Astrocyte of the cerebellum (primary cell): ENCODE measurements at regions of chr10 and their contacts with region 1.

Region 1: GRCh38 chr10:23994479-23995046 is 214.4 kb upstream of the KIAA1217 start:
- DNase-seq: peak; percentile 54
- H3K4me3 ChIP-seq: no peak overlapping the region
- CTCF ChIP-seq: peak; percentile 89

Region 2: GRCh38 chr10:24034571-24034970 is 40.0 kb after region 1 on chr10:
- in situ Hi-C with region 1: no loop called
- DNase-seq: no peak
- H3K4me3 ChIP-seq: no peak overlapping the region
- CTCF ChIP-seq: no peak

Region 3: DNA sequence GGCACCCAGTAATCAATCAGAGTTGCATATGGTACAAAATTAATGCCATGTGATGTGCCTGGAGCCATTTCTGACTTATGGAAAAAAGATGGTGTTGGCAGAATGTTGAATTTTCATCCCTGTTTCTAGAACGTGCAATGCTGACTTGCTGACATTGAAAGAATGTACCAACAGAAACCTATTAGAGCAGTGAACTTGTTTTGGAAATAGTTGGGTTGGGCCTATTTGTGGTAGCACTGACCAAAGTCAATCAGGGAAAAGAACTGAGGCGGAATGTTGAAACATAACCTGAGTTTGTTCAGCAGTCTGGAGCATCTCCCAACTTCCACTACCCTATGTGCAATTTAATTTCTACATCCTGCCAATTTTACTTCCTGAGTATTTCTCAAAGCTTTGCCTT is 202.7 kb after region 1 on chr10:
- in situ Hi-C with region 1: loop called (anchors 5 kb)
- DNase-seq: no peak
- H3K4me3 ChIP-seq: no peak overlapping the region
- CTCF ChIP-seq: no peak

Region 4: DNA sequence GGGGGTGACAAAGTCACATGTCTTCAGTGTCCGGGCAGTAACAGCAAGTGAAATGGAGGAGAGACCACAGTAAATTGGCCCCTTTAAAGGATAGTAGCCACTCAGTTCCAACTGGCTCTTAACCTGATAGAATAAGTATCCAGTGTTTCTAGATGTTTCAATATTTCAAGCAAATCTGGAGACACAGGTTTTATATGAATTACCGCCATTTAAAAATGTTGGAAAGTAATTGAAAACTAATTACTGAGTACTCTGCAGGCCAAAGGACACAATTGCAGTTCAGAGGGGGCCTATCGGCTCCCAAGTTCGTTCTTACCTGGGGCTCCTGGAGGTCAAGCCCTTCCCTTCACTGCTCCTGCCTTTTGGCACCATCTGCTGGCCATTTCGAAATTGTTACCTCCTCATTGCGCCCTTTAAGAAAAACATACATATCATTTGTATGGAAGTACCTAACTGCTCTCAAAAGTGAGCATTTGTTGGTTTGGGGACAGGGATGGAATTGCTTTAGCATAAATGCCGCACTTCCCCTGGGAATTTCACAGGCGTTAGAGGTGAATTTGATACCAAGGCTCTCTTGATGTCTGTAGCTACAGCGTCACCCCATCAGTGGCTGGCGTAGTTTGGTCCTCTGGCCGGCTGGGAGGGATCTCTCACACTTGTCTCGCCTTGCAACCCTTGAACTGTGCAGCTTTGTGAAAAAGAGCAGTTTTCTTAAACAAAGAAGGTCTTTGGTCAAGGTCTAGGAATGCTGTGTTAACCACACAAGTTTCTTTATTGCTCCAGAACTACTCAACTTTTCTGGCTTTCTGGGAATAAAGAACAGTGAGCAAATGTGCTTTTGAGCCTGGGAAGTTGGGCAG is 509.1 kb after region 1 on chr10:
- in situ Hi-C with region 1: loop called (anchors 25 kb)
- DNase-seq: peak; percentile 44
- H3K4me3 ChIP-seq: no peak overlapping the region
- CTCF ChIP-seq: peak; percentile 65